ENCODE measurements at regions of chr10 and their contacts with region 1.

Region 1: DNA sequence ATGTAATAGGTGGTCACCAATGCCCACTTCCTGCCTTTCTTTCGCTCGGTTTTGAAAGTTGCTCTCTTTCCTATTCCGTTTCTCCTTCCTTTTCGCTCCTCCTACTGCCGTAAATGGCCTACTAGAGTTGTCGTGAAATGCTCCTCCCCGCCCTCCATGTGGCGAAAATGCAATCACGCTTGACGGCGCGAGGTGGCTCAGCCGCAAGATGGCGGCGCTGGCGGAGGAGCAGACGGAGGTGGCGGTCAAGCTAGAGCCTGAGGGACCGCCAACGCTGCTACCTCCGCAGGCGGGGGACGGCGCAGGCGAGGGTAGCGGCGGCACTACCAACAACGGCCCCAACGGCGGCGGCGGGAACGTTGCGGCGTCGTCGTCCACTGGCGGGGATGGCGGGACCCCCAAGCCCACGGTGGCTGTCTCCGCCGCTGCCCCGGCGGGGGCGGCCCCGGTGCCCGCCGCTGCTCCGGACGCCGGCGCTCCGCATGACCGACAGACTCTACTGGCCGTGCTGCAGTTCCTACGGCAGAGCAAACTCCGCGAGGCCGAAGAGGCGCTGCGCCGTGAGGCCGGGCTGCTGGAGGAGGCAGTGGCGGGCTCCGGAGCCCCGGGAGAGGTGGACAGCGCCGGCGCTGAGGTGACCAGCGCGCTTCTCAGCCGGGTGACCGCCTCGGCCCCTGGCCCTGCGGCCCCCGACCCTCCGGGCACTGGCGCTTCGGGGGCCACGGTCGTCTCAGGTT is at the start of gene TAF5:
- DNase-seq: peak; percentile 95
- H3K4me3 Mint-ChIP-seq: peak within 1 kb of the TSS; percentile 85
- H3K27ac Mint-ChIP-seq: peak within 1 kb of the TSS; percentile 87
- H3K4me1 Mint-ChIP-seq: peaks cover 18% of the 10 kb centered on the region
- H3K27me3 Mint-ChIP-seq: no peaks in the 10 kb centered on the region
- total RNA-seq, gene TAF5: 16.3 TPM

Region 2: DNA sequence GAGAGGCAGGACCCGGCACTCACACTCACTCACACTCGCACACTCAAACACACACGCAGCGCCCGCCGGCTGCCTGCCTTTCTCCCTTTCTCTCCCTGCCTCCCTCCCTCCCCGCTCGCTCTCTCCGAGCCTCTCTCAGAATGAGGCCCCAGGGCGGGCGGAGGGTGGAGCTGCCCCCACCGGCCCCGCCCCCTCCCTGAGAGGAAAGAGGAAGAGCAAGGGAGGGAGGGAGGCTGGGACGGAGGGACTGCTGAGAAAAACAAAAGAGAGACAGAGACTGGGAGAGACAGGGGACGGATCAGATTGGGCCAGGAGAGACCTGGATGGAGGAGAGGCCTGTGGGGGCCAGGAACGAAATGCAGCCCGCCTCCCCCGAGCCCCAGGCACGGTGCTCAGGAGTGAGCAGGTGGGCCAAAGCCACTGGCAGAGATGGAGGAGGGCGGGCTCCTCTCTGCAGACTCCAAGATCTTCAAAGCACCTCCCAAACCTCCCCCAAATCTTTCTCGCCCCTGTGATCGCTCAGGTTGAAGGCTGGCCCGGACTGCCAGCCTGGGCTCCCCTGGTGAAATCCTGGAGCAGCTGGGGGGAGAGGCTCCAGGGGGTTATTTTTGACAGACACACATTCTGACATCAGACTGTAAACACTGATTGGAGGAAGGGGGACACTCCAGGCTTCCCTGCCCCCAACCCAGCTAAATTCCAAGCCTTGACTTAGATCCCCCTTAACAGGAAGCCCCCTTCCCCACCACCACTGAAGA is 1252.9 kb before region 1 on chr10:
- CTCF ChIA-PET with region 1: no interaction called
- intact Hi-C with region 1: loop called (anchors 5 kb)
- DNase-seq: peak; percentile 92
- H3K4me3 Mint-ChIP-seq: peak overlapping the region; percentile 93
- H3K27ac Mint-ChIP-seq: peak overlapping the region; percentile 98
- H3K4me1 Mint-ChIP-seq: peaks cover 53% of the 10 kb centered on the region
- H3K27me3 Mint-ChIP-seq: no peaks in the 10 kb centered on the region

Region 3: DNA sequence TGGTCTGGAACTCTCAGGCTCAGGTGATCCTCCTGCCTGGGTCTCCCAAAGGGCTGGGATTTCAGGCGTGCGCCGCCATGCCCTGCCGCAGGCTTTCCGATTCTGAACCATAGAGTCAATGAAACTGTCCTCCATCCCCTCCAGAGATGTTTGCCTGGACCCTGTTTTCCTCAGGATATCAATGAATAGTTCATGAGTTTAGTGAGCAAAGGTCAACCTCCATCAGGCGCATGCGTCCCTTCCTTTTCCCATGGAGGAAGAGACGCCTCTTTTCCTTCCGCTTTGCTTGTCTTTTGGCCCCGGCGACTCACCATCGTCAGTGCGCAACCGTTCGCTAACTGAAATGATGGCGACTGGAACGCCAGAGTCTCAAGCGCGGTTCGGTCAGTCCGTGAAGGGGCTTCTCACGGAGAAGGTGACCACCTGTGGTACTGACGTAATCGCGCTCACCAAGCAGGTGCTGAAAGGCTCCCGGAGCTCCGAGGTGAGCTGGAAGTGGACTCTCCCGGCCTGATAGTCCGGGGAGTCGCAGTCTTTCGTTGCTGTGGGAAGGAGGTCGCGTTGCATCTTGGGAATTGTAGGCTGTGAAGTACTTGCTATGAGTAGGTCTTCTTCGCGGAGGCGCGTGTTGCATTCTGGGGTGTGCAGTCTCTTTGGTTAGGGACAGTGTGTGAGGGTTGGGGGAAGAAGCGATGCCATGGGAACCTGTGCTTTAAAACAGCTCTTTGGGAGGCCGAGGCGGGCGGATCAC is 513.8 kb before region 1 on chr10 and contains the start of gene BORCS7:
- CTCF ChIA-PET with region 1: no interaction called
- intact Hi-C with region 1: loop called (anchors 1 kb)
- DNase-seq: peak; percentile 95
- H3K4me3 Mint-ChIP-seq: peak within 1 kb of the TSS; percentile 95
- H3K27ac Mint-ChIP-seq: peak within 1 kb of the TSS; percentile 97
- H3K4me1 Mint-ChIP-seq: peaks cover 17% of the 10 kb centered on the region
- H3K27me3 Mint-ChIP-seq: no peaks in the 10 kb centered on the region
- total RNA-seq, gene BORCS7: 5.6 to 5.8 TPM

Region 4: GRCh38 chr10:103307594-103307993 is 60.4 kb before region 1 on chr10:
- CTCF ChIA-PET with region 1: no interaction called
- intact Hi-C with region 1: no loop called
- DNase-seq: no peak
- H3K4me3 Mint-ChIP-seq: no peak overlapping the region
- H3K27ac Mint-ChIP-seq: no peak overlapping the region
- H3K4me1 Mint-ChIP-seq: no peaks in the 10 kb centered on the region
- H3K27me3 Mint-ChIP-seq: no peaks in the 10 kb centered on the region

Region 5: GRCh38 chr10:103350501-103351260 is 17.3 kb before region 1 on chr10 and contains the start of gene PCGF6:
- CTCF ChIA-PET with region 1: no interaction called
- intact Hi-C with region 1: loop called (anchors 1 kb)
- DNase-seq: peak; percentile 70
- H3K4me3 Mint-ChIP-seq: peak within 1 kb of the TSS; percentile 90
- H3K27ac Mint-ChIP-seq: peak within 1 kb of the TSS; percentile 86
- H3K4me1 Mint-ChIP-seq: peaks cover 12% of the 10 kb centered on the region
- H3K27me3 Mint-ChIP-seq: no peaks in the 10 kb centered on the region
- total RNA-seq, gene PCGF6: 10.6 to 10.7 TPM

Region 6: DNA sequence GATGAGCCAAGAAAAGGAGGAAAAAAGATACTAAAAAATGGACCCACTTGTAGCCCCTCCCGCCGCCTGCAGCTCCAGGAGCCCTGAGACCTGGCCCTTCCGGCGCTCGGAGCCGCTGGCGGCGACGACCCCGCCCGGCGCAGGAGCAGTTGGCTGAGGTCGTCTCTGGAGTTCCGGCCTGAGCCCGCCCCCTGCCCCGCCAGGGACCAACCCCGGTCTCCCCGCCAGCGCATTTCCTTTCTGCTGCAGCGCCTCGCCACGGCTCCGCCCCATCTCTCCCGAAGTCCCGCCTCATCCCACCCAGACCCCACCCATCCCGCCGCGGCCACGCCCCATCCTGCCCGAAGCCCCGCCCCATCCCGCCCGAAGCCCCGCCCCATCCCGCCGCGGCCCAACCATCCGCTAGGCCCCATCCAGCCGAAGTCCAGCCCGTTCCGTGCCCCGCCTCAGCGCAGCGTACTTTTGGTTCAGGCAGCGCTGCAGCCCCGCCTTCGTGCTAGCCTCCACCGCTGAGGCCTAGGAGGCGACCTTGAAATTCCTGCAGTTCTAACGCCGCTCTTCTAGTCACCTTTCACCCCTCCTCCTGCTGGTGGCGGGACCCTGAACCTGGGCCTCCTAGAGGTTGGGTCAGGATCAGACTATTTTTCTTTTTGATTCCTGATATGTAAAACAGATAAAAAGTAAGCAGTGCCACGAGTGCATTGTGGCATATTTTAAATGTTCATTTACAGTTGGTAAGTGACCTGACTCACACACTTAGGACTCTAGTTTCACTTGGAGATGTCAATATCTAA is 550.3 kb after region 1 on chr10 and contains the start of gene STN1:
- CTCF ChIA-PET with region 1: no interaction called
- intact Hi-C with region 1: loop called (anchors 2 kb)
- DNase-seq: peak; percentile 98
- H3K4me3 Mint-ChIP-seq: peak within 1 kb of the TSS; percentile 89
- H3K27ac Mint-ChIP-seq: peak within 1 kb of the TSS; percentile 94
- H3K4me1 Mint-ChIP-seq: peaks cover 29% of the 10 kb centered on the region
- H3K27me3 Mint-ChIP-seq: no peaks in the 10 kb centered on the region
- total RNA-seq, gene STN1: 53.3 to 54.8 TPM